Uterus (tissue), 4 donors: ENCODE measurements at regions of chr16 and their contacts with region 1.

Region 1: GRCh38 chr16:71412270-71413160 is 29.3 kb downstream of the TLE7 start:
- DNase-seq: peak; percentile 53 to 65
- H3K4me3 ChIP-seq: no peak overlapping the region
- H3K27ac ChIP-seq: no peak overlapping the region
- H3K4me1 ChIP-seq: no peaks in the 10 kb centered on the region
- H3K27me3 ChIP-seq: no peaks in the 10 kb centered on the region
- CTCF ChIP-seq: peak; percentile 65 to 83 (median 72)
- POLR2A ChIP-seq: no peak

Region 2: DNA sequence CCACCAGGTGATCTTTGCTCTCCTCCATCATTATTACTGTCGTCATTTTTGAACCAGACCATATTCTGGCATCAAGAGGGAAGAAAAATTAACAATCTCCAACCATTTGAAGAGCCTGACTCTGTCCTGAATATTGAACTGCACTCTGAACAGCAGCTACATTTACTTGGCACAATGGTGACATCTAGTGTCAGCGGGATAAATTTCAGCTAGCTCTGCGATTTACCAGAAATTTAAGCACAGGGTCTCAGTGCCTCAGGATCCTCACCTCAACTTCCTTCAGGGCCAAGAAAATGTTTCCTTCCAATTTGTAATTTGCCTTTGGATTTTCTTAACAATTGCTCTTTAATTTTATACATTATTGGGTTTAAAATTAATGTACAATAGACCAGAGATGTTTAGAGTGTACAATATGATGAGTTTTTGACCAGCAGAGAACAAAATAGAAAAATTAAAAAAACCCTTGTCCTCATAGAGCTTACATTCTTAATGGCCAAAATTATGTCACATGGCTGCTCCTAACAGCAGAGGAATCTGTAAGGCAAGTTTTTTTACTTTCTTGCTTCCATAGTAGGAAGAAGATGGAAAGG is 87.4 kb after region 1 on chr16:
- intact Hi-C with region 1: loop called (anchors 5 kb)
- DNase-seq: no peak
- H3K4me3 ChIP-seq: no peak overlapping the region
- H3K27ac ChIP-seq: no peak overlapping the region
- H3K4me1 ChIP-seq: no peaks in the 10 kb centered on the region
- H3K27me3 ChIP-seq: no peaks in the 10 kb centered on the region
- CTCF ChIP-seq: peak; percentile 32 to 66 (median 59)
- POLR2A ChIP-seq: no peak